ENCODE measurements at regions of chr6 and their contacts with region 1.

Region 1: GRCh38 chr6:135423649-135424128 is 73.9 kb downstream of the AHI1 start:
- DNase-seq: no peak
- H3K4me3 Mint-ChIP-seq: no peak overlapping the region
- H3K27ac Mint-ChIP-seq: peak overlapping the region; percentile 16
- H3K4me1 Mint-ChIP-seq: peaks cover 11% of the 10 kb centered on the region
- H3K27me3 Mint-ChIP-seq: no peaks in the 10 kb centered on the region

Region 2: DNA sequence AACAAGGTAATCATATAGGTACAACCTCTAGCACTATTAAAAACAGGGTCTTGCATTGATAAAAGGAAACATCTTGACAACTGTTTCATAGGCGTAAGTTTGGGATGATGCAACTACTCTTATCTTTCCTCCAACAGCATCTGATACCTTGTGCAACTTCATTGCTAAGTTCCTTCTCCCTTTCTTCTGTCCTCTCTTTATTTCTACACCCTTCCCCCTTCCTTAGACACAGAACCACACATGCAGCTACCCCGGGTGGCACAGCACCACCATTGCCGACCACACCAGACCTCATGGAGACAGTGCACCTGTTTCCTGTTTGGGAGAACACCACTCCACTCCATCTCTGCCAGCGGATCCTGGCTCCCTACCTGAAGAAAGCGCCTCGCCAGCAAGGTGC is 228.2 kb before region 1 on chr6:
- intact Hi-C with region 1: loop called (anchors 5 kb)
- DNase-seq: no peak
- H3K4me3 Mint-ChIP-seq: peak overlapping the region; percentile 45
- H3K27ac Mint-ChIP-seq: peak overlapping the region; percentile 25
- H3K4me1 Mint-ChIP-seq: peaks cover 58% of the 10 kb centered on the region
- H3K27me3 Mint-ChIP-seq: no peaks in the 10 kb centered on the region

Region 3: DNA sequence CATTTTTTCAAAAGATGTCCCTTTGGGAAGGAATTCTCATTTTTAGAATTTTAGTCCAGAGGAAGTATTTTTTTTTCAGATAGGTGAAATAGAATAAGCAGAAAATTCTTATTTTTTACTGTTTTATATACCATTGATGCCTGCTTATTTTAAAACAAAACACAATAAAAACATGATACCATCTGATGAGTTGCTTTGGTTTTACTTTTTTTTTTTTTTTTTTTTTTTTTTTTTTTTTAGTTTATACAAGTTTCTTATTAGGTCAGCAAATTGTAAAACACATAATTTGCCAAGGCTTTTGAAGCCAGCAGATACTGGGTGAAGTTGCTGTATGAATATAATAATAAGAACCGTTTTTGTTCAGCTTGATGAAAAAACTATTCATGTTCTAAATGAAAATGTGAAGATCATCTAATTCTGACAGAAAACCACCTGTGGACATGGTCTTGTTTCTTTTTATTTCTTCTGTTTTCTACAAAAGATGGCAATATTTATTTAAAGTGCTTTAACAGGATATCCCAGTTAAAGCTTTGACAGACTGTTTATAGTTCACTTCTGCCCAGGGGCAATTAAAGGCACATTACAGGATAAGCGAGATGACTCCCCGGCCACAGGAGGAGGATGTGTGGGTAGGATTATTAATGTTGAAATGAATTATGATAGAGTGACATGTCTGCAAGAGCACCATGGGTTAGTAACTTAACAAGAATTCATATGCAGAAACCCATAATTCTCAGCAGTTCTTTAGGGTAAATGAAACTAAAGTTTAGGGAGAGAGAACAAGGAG is 211.5 kb before region 1 on chr6:
- intact Hi-C with region 1: loop called (anchors 5 kb)
- DNase-seq: no peak
- H3K4me3 Mint-ChIP-seq: peak overlapping the region; percentile 72
- H3K27ac Mint-ChIP-seq: peak overlapping the region; percentile 90
- H3K4me1 Mint-ChIP-seq: peaks cover 63% of the 10 kb centered on the region
- H3K27me3 Mint-ChIP-seq: no peaks in the 10 kb centered on the region

Region 4: DNA sequence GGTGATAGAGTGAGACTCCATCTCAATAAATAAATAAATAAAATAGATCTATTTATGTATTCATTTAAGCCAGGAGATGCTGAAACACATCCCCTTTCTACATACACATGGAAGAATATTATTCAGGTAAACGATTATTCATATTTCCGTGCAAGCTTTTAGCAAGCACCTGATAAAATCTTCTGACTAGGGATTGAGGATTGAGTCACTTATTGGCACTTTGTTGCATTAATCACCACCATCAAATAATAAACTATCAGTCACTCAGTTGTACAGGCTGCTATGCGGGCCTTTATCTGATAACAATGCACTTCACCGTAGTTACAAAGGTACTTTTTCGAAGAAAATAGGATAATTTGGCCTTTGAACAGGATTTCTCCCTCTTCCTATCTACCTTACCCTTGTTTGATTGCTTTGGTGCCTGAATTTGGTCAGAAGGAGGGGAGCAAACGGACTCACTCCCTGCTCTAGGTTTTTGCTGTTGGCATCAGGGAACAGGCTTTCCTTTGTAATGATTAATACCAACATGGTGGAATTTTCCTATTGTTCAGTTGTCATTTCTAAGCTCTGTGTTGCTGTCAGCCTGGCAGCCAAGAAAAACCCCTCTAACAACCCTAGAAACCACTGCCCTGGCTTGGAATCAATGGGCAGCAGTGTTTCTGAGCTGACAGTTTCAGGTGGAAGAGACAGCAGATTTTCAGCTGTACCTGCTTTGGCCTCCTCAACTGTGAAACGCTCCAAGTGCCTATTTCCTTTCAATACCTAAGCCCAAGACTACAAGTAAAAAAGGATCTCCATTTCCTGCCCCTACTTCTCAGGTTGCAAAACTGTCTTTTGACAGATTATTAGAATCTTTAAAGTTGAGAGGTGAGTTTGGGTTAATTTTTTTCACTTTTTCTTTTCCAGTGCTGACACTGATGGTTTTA is 179.6 kb before region 1 on chr6:
- intact Hi-C with region 1: no loop called
- DNase-seq: no peak
- H3K4me3 Mint-ChIP-seq: no peak overlapping the region
- H3K27ac Mint-ChIP-seq: no peak overlapping the region
- H3K4me1 Mint-ChIP-seq: peaks cover 7% of the 10 kb centered on the region
- H3K27me3 Mint-ChIP-seq: peaks cover 4% of the 10 kb centered on the region

Region 5: GRCh38 chr6:135299256-135299655 is 124.4 kb before region 1 on chr6:
- intact Hi-C with region 1: loop called (anchors 5 kb)
- DNase-seq: no peak
- H3K4me3 Mint-ChIP-seq: no peak overlapping the region
- H3K27ac Mint-ChIP-seq: no peak overlapping the region
- H3K4me1 Mint-ChIP-seq: peaks cover 14% of the 10 kb centered on the region
- H3K27me3 Mint-ChIP-seq: no peaks in the 10 kb centered on the region